Pancreas (tissue), 10 donors: ENCODE measurements at regions of chr20 and their contacts with region 1.

Region 1: DNA sequence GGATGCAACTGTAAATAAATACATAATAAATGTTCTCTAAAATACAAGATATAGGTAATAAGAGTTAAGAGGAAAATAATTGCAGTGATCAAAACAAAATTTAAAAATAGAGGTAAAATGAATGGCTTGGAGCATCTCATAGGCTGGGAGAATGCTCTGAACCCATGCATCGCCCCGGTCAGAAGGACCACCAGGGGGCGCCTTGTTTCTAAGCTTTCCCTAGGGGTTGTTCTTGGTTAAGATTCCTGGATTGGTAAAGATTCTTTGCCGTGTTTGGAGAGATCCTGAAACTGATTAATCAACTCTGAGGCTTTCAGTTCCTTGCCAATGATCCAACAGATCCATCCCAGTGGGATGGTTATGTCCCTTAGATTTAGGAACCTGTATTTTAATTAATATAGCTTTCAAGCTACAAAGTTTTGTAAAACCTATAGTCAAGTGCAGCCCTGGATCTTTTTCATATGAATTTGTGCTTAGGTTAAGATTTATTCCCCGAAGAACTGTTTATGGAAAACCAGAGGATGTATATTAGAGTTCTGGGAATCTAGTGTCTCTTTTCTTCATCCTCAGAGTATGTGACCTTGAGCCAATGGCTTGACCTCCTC is 45.3 kb upstream of the PRELID3B start:
- DNase-seq: peak; percentile 51 to 94 (median 78)
- ATAC-seq: peak in 3 of 4 donors; percentile 88 to 93 (median 92)
- H3K4me3 ChIP-seq: no peak overlapping the region
- H3K27ac ChIP-seq: no peak overlapping the region
- H3K4me1 ChIP-seq: peaks cover 0 to 5% (median 0%) of the 10 kb centered on the region in 3 donors
- H3K27me3 ChIP-seq: no peaks in the 10 kb centered on the region
- CTCF ChIP-seq: peak; percentile 85 to 93 (median 90)

Region 2: GRCh38 chr20:59222253-59223181 is 134.6 kb after region 1 on chr20:
- intact Hi-C with region 1: loop called in 1 of 3 experiments (anchors 10 kb)
- DNase-seq: peak; percentile 66 to 97 (median 82)
- ATAC-seq: peak; percentile 97 to 99 (median 97)
- H3K4me3 ChIP-seq: peak overlapping the region; percentile 49 to 65 (median 52)
- H3K27ac ChIP-seq: peak overlapping the region in 2 of 4 donors; percentile 24 to 66
- H3K4me1 ChIP-seq: peaks cover 0 to 8% (median 0%) of the 10 kb centered on the region in 3 donors
- H3K27me3 ChIP-seq: peaks cover 0 to 3% (median 0%) of the 10 kb centered on the region in 4 donors
- CTCF ChIP-seq: peak; percentile 82 to 95 (median 92)

Region 3: GRCh38 chr20:59403261-59403961 is 315.5 kb after region 1 on chr20:
- intact Hi-C with region 1: loop called in 2 of 3 experiments (anchors 5 to 10 kb)
- DNase-seq: peak; percentile 31 to 94 (median 67)
- ATAC-seq: peak; percentile 78 to 90 (median 86)
- H3K4me3 ChIP-seq: peak overlapping the region in 2 of 4 donors; percentile 18
- H3K27ac ChIP-seq: no peak overlapping the region
- H3K4me1 ChIP-seq: peaks cover 5 to 9% (median 6%) of the 10 kb centered on the region in 3 donors
- H3K27me3 ChIP-seq: peaks cover 0 to 9% (median 1%) of the 10 kb centered on the region in 4 donors
- CTCF ChIP-seq: peak; percentile 99